ENCODE measurements at regions of chr1 and their contacts with region 1.

Region 1: DNA sequence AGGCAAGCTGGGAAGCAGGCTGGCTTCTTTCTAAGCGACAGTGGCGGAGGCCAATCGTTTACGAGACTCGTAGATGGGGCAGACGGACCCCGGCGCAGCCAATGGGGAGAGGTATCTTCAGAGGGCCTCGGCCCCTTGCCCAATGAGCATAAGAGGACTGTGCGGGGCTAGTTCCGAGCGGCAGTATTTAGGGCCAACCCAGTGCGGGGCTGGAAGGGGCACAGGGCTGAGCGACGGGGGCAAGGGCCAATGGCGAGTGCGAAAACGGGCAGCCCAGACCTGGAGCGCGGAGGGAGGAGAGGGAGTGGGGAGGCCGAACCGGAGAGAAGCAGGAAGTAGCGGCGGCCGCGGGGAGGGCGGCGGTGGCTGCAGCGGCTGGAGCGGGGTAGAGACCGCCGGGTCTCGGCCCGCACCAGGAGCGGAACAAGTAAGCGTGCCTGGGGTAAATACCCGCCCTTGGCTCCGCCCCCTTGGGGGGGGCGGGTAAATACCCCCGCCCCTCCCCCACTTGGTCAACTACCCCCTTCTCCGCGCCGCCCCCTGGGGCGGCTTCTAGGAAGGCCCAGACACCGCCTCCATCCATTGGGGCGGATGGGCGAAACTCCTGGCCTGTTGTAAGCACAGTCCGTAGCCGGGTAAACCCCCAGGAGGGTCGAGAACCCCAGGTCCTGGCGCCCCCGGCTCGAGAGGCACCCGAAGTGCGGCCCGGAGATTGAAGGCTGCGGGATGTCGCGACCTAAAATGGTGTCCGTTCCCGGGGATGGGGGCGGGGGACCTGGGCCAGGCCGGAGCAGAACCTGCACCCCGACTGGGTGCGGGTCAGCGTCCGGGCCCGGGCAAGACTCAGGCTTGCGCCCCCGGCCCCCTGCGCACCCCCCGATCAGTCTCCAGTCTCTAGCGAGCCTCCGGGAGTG is at the start of gene ZNF687:
- DNase-seq: peak; percentile 100
- ATAC-seq: peak; percentile 90
- H3K4me3 ChIP-seq: peak within 1 kb of the TSS; percentile 59
- H3K27ac ChIP-seq: peak within 1 kb of the TSS; percentile 84
- H3K4me1 ChIP-seq: peaks cover 5% of the 10 kb centered on the region; the same call in 1 of the 2 replicates
- H3K27me3 ChIP-seq: no peaks in the 10 kb centered on the region
- CTCF ChIP-seq: no peak
- POLR2A ChIP-seq: peak; percentile 64
- RAD21 ChIP-seq: no peak
- total RNA-seq, gene ZNF687: 5.7 and 6.4 TPM in 2 replicates

Region 2: DNA sequence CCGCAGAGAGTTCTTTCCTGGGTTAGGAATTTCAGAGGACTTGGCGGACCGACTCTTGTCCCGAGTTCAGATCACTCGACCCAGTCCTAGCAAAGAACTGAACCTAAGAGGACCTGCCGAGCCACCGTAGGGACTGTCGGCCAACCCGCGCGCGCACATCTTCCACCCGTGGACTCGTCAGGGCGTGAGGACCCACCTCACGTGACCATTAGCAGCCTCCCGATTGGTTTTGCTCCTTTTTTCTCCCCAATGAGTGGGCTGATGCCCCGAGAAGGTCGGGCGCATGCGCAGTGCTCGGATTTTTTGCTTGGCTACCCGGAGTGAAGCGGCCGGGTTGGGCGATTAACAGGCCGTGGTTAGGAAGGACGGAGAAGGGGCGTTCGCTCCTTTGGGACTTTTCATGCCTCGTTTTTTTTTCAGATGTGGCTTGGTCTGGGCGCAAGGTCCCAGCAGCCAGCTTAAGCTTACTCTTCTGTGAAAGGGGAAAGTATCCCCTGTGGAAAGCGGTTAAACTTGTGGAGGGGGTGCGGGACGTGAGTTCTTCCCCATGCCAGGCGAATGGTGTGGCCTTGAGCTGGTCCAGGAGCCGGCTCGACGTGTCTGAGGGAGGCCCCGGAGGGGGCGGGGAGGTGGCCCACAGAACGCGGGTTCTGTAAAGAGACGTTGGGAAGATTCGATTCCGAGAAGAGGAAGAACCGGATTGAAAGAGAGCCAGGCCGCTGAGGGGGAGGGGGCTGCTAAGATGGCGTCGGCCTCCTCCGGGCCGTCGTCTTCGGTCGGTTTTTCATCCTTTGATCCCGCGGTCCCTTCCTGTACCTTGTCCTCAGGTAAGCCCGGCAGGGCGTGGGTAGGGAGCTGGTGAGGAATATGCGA is 83.7 kb before region 1 on chr1 and contains the start of gene PIP5K1A:
- CTCF ChIA-PET with region 1: no interaction called
- POLR2A ChIA-PET with region 1: no interaction called
- dilution Hi-C with region 1: no loop called
- in situ Hi-C with region 1: no loop called
- intact Hi-C with region 1: loop called (anchors 1 kb)
- DNase-seq: peak; percentile 97
- ATAC-seq: peak; percentile 86
- H3K4me3 ChIP-seq: peak within 1 kb of the TSS; percentile 98
- H3K27ac ChIP-seq: peak within 1 kb of the TSS; percentile 96
- H3K4me1 ChIP-seq: peaks cover 5% of the 10 kb centered on the region; the same call in 1 of the 2 replicates
- H3K27me3 ChIP-seq: no peaks in the 10 kb centered on the region
- CTCF ChIP-seq: no peak
- POLR2A ChIP-seq: peak; percentile 88
- RAD21 ChIP-seq: no peak
- total RNA-seq, gene PIP5K1A: 52.5 and 59.1 TPM in 2 replicates

Region 3: GRCh38 chr1:151465026-151465425 is 182.8 kb after region 1 on chr1:
- CTCF ChIA-PET with region 1: no interaction called
- POLR2A ChIA-PET with region 1: no interaction called
- dilution Hi-C with region 1: no loop called
- in situ Hi-C with region 1: no loop called
- intact Hi-C with region 1: no loop called
- DNase-seq: no peak
- ATAC-seq: no peak
- H3K4me3 ChIP-seq: no peak overlapping the region
- H3K27ac ChIP-seq: no peak overlapping the region
- H3K4me1 ChIP-seq: no peaks in the 10 kb centered on the region
- H3K27me3 ChIP-seq: peaks cover 9% of the 10 kb centered on the region
- CTCF ChIP-seq: no peak
- POLR2A ChIP-seq: no peak
- RAD21 ChIP-seq: no peak